Left lung (tissue), 14 donors: ENCODE measurements at regions of chr4 and their contacts with region 1.

Region 1: DNA sequence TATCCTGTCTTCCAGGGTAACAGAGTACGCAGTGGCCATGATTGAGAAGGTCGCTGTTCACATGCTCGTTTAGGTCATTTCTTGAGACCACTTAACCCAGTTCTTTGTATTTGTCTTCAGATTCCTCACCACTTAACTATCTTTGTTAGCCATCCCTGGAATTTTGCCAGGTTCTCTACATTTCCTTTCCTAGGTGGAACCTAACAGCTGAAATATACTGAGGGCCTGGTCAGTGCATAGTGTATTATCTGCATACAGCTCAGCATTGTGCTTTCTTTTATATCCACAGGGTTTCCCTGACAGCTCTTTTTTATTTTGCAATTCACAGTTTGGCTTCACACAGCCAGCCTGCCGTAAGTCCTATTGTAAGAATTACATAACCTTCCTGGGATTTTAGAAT is 148.9 kb upstream of the GALNT7 start:
- DNase-seq: no peak
- ATAC-seq: no peak
- H3K4me3 ChIP-seq: no peak overlapping the region
- H3K27ac ChIP-seq: no peak overlapping the region
- H3K4me1 ChIP-seq: no peaks in the 10 kb centered on the region
- H3K27me3 ChIP-seq: no peaks in the 10 kb centered on the region
- CTCF ChIP-seq: no peak

Region 2: DNA sequence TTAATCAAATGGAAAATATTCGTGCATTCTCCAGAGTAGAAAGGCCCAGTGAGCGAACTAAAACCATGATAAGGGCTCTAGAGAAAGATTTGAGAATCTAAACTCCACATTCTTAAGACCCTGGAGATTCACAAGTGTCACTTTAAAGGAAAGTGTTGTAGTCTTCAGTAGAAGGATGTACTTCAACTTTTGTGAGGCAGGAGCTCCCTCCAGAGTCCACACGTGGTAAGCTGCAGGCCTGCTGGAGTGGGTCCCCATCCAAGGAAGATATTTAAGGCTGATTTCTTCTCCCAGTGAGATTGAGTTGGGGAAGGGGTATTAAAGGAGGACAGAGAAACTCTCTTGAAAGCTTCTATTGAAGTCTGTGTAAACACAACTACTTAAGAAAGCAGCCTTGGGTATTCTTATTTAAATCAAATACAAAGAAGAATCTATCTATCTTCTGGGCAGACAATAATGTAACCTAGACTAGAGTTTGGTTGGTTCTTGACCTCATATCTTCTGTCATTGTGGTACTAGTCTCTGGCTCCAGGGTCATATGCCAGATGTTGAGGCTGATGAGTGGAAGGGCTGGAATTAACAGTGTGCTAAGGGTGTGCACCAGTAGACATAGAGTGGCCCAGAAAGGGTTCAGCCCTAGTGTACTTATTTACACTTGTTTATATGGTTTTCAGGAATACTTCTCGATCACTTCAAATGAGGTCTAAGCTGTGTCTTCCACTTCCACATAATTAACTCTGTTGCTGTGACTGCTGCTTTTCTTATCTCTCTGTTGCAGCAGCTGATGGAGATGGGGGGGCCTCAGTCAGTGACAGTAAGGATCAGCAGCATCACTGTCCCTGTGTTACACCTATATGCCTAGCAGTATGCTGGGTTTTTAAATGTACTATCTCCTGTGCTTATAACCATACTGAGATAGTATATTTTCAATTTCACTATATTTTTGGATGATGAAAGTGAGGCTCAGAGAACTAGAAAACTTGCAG is 238.3 kb after region 1 on chr4:
- intact Hi-C with region 1: loop called in 1 of 2 experiments (anchors 5 kb)
- DNase-seq: peak in 2 of 4 donors; percentile 44 to 76
- ATAC-seq: peak; percentile 98
- H3K4me3 ChIP-seq: no peak overlapping the region
- H3K27ac ChIP-seq: no peak overlapping the region
- H3K4me1 ChIP-seq: no peaks in the 10 kb centered on the region
- H3K27me3 ChIP-seq: no peaks in the 10 kb centered on the region
- CTCF ChIP-seq: peak; percentile 67 to 71